B cell (primary cell): ENCODE measurements at regions of chr20 and their contacts with region 1.

Region 1: GRCh38 chr20:48787861-48788375 is 39.9 kb downstream of the PREX1 start:
- DNase-seq: peak; percentile 60
- ATAC-seq: no peak
- H3K4me3 ChIP-seq: peak overlapping the region in 1 of 5 experiments; percentile 23
- H3K4me3 Mint-ChIP-seq: peak overlapping the region; percentile 63
- H3K27ac ChIP-seq: peak overlapping the region; percentile 74 to 80
- H3K27ac Mint-ChIP-seq: peak overlapping the region; percentile 94
- H3K4me1 ChIP-seq: peaks cover 75 to 86% of the 10 kb centered on the region in 2 donors
- H3K4me1 Mint-ChIP-seq: peaks cover 74% of the 10 kb centered on the region
- H3K27me3 ChIP-seq: no peaks in the 10 kb centered on the region
- H3K27me3 Mint-ChIP-seq: no peaks in the 10 kb centered on the region
- CTCF ChIP-seq: no peak

Region 2: DNA sequence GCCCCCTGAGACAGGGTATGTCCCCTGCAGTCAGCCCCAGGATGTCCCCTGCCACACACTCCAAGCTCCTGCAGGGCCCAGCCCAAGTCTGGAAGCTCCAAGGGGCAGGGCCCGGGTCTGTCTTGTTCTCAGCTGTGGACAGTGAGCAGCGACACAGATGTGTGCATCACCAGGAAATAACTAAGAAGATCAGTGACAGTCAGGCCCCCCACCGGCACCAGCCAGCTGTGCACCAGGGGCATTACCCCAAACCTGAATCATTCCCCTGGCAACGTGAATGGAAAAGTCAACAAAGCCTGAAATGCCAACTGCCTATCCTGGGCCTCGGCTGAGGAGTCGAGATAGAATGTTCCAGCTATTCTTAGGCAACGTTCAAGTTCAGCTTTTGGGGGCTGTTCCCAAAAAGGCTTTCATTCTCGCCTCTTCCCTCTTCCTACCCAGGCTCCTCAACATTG is 65.2 kb before region 1 on chr20:
- CTCF ChIA-PET with region 1: interaction called, 7 read pairs
- POLR2A ChIA-PET with region 1: interaction called, 3 read pairs
- intact Hi-C with region 1: loop called (anchors 5 kb)
- DNase-seq: peak; percentile 58
- ATAC-seq: peak; percentile 55
- H3K4me3 ChIP-seq: peak overlapping the region in 1 of 5 experiments; percentile 21
- H3K4me3 Mint-ChIP-seq: peak overlapping the region; percentile 75
- H3K27ac ChIP-seq: peak overlapping the region; percentile 57 to 80
- H3K27ac Mint-ChIP-seq: peak overlapping the region; percentile 84
- H3K4me1 ChIP-seq: peaks cover 66 to 69% of the 10 kb centered on the region in 2 donors
- H3K4me1 Mint-ChIP-seq: peaks cover 73% of the 10 kb centered on the region
- H3K27me3 ChIP-seq: no peaks in the 10 kb centered on the region
- H3K27me3 Mint-ChIP-seq: no peaks in the 10 kb centered on the region
- CTCF ChIP-seq: no peak

Region 3: DNA sequence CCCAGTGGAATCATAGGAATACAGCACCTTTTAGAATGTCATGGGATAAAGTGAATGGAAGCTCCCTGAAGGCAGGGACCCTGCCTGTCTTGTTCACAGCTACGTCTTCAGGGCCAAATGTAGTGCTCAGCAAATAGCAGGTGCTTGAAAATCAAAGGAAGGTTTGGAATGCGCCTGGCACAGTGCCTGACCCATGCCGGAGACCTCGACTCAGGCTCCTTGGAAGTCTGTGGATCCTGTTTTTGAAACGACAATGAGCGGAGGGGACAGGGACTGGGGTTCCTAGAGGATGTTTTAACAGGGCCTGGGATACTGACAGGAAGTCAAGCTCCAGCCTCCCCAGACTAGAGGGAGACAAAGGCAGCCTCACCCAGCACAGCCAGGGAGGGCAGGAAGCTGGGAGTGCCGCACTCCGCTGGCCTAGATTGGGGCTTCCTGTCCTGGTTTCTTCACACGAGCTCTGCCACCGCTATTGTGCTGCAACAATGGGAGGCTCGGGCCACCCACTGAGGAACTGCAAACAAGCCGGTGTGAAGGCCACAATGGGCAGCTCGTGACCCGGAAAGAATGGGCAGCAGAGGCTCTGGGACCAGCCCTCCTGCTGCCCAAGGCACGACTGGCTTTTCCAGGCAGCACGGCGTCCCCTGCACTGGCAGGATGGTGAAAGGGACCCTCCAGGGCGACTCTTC is 36.8 kb before region 1 on chr20:
- CTCF ChIA-PET with region 1: interaction called, 3 read pairs
- POLR2A ChIA-PET with region 1: interaction called, 3 read pairs
- intact Hi-C with region 1: loop called (anchors 5 kb)
- DNase-seq: peak; percentile 28
- ATAC-seq: no peak
- H3K4me3 ChIP-seq: peak overlapping the region in 1 of 5 experiments; percentile 16
- H3K4me3 Mint-ChIP-seq: peak overlapping the region; percentile 84
- H3K27ac ChIP-seq: peak overlapping the region; percentile 14 to 62
- H3K27ac Mint-ChIP-seq: peak overlapping the region; percentile 95
- H3K4me1 ChIP-seq: peaks cover 77 to 80% of the 10 kb centered on the region in 2 donors
- H3K4me1 Mint-ChIP-seq: peaks cover 87% of the 10 kb centered on the region
- H3K27me3 ChIP-seq: no peaks in the 10 kb centered on the region
- H3K27me3 Mint-ChIP-seq: no peaks in the 10 kb centered on the region
- CTCF ChIP-seq: no peak

Region 4: DNA sequence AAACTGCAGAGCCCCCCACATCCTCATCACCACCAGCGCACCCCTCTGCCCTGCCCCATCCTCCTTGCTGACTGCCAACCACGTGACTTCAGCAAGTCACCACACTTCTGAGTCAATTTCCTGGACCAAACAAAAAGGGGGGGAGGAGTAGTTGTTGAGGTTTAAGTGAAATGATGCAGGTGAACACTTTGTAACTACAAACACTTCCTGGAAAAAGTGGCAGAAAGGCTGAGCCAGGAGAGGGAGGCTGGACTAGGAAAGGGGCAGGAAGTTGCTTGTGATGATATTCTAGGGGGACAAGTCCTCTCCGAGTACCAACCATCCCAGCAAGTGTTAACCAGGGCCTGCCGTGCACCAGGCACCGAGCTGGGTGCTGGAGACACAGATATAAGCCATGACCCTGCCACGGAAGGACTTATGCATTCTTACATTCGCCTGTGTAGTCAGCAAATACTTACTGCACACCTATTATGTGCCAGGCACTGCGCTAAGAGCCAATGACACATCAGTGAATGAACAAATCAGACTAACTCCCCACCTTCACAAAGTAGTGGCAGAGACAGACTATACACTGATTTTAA is 27.4 kb before region 1 on chr20:
- CTCF ChIA-PET with region 1: no interaction called
- POLR2A ChIA-PET with region 1: interaction called, 3 read pairs
- intact Hi-C with region 1: loop called (anchors 1 kb)
- DNase-seq: peak; percentile 74
- ATAC-seq: peak; percentile 84
- H3K4me3 ChIP-seq: peak overlapping the region in 4 of 5 experiments; percentile 8 to 30 (median 18)
- H3K4me3 Mint-ChIP-seq: peak overlapping the region; percentile 89
- H3K27ac ChIP-seq: peak overlapping the region; percentile 76 to 80
- H3K27ac Mint-ChIP-seq: peak overlapping the region; percentile 98
- H3K4me1 ChIP-seq: peaks cover 41 to 69% of the 10 kb centered on the region in 2 donors
- H3K4me1 Mint-ChIP-seq: peaks cover 79% of the 10 kb centered on the region
- H3K27me3 ChIP-seq: no peaks in the 10 kb centered on the region
- H3K27me3 Mint-ChIP-seq: no peaks in the 10 kb centered on the region
- CTCF ChIP-seq: no peak

Region 5: GRCh38 chr20:48818407-48818987 is 30.6 kb after region 1 on chr20:
- CTCF ChIA-PET with region 1: interaction called, 6 read pairs
- POLR2A ChIA-PET with region 1: interaction called, 11 read pairs
- intact Hi-C with region 1: loop called (anchors 1 kb)
- DNase-seq: peak; percentile 76
- ATAC-seq: peak; percentile 77
- H3K4me3 ChIP-seq: peak overlapping the region; percentile 1 to 38 (median 28)
- H3K4me3 Mint-ChIP-seq: peak overlapping the region; percentile 92
- H3K27ac ChIP-seq: peak overlapping the region; percentile 63 to 84
- H3K27ac Mint-ChIP-seq: peak overlapping the region; percentile 88
- H3K4me1 ChIP-seq: peaks cover 93 to 97% of the 10 kb centered on the region in 2 donors
- H3K4me1 Mint-ChIP-seq: no peaks in the 10 kb centered on the region
- H3K27me3 ChIP-seq: no peaks in the 10 kb centered on the region
- H3K27me3 Mint-ChIP-seq: no peaks in the 10 kb centered on the region
- CTCF ChIP-seq: no peak

Region 6: DNA sequence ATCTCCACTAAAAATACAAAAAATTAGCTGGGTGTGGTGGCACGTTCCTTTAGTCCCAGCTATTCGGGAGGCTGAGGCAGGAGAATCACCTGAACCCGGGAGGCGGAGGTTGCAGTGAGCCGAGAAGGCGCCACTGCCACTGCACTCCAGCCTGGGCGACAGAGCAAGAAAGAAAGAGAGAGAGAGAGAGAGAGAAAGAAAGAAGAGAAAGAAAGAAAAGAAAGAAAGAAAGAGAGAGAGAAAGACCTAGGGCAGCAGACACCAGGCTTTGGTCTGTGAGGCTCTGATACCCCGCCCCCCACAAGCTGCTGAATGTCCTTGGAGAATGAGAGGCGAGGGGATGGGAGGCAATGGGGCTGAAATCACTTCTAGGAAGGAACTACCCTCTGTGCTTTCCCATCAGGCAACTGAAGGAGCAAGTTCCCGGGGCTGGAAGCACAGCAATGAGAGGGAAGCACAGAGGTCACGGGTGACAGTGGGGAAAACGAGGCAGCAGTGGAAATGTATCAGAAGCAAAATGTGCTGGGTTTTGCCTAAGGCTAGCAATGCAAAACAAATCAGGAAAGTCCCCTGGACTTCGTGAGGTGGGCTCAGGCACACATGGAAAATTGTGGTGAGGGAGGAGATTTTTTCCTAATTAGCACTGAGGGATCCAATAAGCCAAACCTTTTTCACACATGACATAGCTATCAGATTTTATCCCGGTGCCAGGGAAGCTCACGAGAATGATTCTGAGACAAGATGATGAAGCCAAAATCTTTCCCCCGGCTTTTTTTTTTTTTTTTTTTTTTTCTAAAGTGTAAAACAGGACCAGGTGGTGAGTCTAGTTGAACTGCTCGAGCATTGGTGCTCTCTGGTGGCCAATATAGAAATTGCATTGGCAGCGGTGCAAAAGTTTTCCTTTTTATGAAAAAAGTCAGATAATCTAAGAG is 116.7 kb after region 1 on chr20:
- CTCF ChIA-PET with region 1: interaction called, 19 read pairs
- POLR2A ChIA-PET with region 1: no interaction called
- intact Hi-C with region 1: no loop called
- DNase-seq: peak; percentile 81
- ATAC-seq: peak; percentile 78
- H3K4me3 ChIP-seq: no peak overlapping the region
- H3K4me3 Mint-ChIP-seq: peak overlapping the region; percentile 19
- H3K27ac ChIP-seq: no peak overlapping the region
- H3K27ac Mint-ChIP-seq: no peak overlapping the region
- H3K4me1 ChIP-seq: peaks cover 6 to 7% of the 10 kb centered on the region in 2 donors
- H3K4me1 Mint-ChIP-seq: peaks cover 10% of the 10 kb centered on the region
- H3K27me3 ChIP-seq: no peaks in the 10 kb centered on the region
- H3K27me3 Mint-ChIP-seq: no peaks in the 10 kb centered on the region
- CTCF ChIP-seq: peak; percentile 90